Common myeloid progenitor, CD34-positive (primary cell): ENCODE measurements at regions of chr1 and their contacts with region 1.

Region 1: DNA sequence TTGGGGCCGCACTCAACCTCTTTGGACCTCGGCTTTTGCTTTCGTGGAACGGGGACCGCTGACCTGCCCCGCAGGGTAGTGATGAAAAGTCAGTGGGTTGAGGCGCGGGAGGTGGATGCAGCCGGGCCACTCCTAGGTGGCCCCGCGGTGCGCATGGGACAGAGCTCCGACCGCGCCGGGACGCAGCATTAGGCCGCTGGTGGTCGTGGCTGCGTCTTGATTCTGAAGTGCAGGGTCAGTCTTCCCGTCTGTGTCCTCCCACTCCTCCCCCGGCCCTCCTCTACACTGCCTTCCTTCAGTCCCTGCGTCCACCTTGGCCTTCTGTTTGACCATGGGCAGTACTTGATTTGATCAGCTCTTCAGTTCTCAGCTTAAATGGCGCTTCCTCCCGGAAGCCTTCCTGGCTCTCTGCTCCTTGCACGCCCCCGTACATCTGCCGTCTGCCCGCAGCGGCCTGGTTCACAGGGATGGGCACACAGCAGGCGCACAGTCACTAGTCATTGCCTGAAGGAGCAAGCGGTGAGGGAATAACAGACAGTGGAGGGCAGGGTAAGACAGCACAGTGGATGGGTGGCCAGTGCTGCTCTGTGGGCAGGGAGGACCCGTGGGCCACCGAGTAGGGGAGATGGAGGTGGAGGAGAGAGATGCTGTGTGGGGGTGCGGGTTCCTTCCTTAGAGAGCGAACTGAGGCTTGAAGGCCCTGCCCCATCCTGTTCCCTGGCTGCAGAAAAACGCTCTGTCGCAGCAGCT is 633 bp downstream of the THEMIS2 start:
- DNase-seq: peak in 1 of 3 donors; percentile 54
- H3K4me3 ChIP-seq: peak overlapping the region; percentile 63 to 96 (median 91)
- H3K27ac ChIP-seq: peak overlapping the region; percentile 58 to 76
- H3K4me1 ChIP-seq: peaks cover 5 to 69% (median 64%) of the 10 kb centered on the region in 4 experiments
- H3K27me3 ChIP-seq: no peaks in the 10 kb centered on the region

Region 2: DNA sequence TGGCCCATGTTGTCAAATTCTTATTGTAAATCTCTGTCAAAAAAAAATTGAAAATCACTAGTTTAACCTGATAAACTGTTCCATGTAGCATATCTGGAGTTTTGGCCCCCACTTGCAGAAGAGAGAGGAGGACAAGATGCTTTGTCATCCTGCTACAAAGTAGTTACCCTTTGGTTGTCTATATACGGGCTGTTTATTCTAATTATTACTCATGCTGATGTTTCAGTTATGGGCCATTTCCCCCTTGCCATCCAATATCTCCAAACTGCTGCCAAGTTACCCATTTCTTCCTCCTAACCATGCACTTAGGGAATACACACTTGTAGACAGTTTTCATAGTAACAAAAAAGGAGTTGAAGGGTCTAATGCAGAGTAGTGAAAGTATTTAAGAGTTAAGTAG is 77.4 kb before region 1 on chr1:
- CTCF ChIA-PET with region 1: no interaction called
- POLR2A ChIA-PET with region 1: no interaction called
- DNase-seq: no peak
- H3K4me3 ChIP-seq: no peak overlapping the region
- H3K27ac ChIP-seq: no peak overlapping the region
- H3K4me1 ChIP-seq: no peaks in the 10 kb centered on the region
- H3K27me3 ChIP-seq: no peaks in the 10 kb centered on the region

Region 3: GRCh38 chr1:27891196-27891889 is 18.4 kb after region 1 on chr1:
- CTCF ChIA-PET with region 1: interaction called, 5 read pairs
- POLR2A ChIA-PET with region 1: interaction called, 16 read pairs
- DNase-seq: peak; percentile 67 to 85 (median 80)
- H3K4me3 ChIP-seq: peak overlapping the region in 1 of 7 experiments; percentile 14
- H3K27ac ChIP-seq: peak overlapping the region; percentile 52 to 81
- H3K4me1 ChIP-seq: peaks cover 22 to 34% (median 28%) of the 10 kb centered on the region in 4 experiments
- H3K27me3 ChIP-seq: no peaks in the 10 kb centered on the region